Right lobe of liver (tissue), 6 donors: ENCODE measurements at regions of chr14 and their contacts with region 1.

Region 1: GRCh38 chr14:21103710-21104447 is 3.0 kb downstream of the TMEM253 start:
- DNase-seq: peak; percentile 96
- ATAC-seq: peak; percentile 83 to 90 (median 84)
- H3K4me3 ChIP-seq: peak overlapping the region; percentile 55 to 69 (median 68)
- H3K27ac ChIP-seq: peak overlapping the region; percentile 93 to 99 (median 98)
- H3K4me1 ChIP-seq: peaks cover 0 to 49% (median 27%) of the 10 kb centered on the region in 4 donors
- H3K27me3 ChIP-seq: no peaks in the 10 kb centered on the region
- CTCF ChIP-seq: peak; percentile 71 to 86 (median 74)
- POLR2A ChIP-seq: peak; percentile 79

Region 2: GRCh38 chr14:21039585-21040369 is 64.1 kb before region 1 on chr14:
- intact Hi-C with region 1: no loop called
- DNase-seq: peak in 1 of 3 donors; percentile 54
- ATAC-seq: peak; percentile 47 to 61 (median 48)
- H3K4me3 ChIP-seq: no peak overlapping the region
- H3K27ac ChIP-seq: peak overlapping the region; percentile 40 to 56 (median 46)
- H3K4me1 ChIP-seq: peaks cover 2 to 64% (median 20%) of the 10 kb centered on the region in 4 donors
- H3K27me3 ChIP-seq: no peaks in the 10 kb centered on the region
- CTCF ChIP-seq: peak; percentile 57 to 80 (median 70)
- POLR2A ChIP-seq: no peak

Region 3: DNA sequence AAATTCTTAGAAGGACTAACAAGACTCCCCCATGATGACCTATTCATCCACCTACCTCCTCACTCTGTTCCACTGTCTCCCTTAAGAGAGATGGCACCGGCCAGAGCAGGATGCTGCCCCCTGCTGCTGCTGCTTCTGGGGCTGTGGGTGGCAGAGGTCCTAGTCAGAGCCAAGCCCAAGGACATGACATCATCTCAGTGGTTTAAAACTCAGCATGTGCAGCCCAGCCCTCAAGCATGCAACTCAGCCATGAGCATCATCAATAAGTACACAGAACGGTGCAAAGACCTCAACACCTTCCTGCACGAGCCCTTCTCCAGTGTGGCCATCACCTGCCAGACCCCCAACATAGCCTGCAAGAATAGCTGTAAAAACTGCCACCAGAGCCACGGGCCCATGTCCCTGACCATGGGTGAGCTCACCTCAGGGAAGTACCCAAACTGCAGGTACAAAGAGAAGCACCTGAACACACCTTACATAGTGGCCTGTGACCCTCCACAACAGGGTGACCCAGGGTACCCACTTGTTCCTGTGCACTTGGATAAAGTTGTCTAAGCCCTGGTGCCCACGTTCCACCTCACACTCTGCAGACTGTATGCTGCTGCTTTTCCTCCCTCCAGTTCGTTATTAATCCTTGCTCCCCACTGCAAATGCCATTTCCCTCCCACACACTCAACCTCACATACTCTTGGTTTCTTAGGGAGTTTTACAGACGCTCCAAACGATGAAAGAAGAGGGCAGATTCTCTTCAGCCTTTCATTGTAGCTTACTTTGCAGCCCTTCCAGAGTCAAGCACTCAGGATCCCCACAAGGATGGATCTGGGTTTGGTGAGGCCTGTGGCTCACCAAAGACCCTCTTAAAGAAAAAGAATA is 45.8 kb before region 1 on chr14 and contains the start of gene RNASE8:
- intact Hi-C with region 1: loop called in 1 of 2 experiments (anchors 5 kb)
- DNase-seq: peak in 1 of 3 donors; percentile 25
- ATAC-seq: peak in 1 of 4 donors; percentile 2
- H3K4me3 ChIP-seq: no peak within 1 kb of the TSS
- H3K27ac ChIP-seq: peak within 1 kb of the TSS in 2 of 3 donors; percentile 54 to 74
- H3K4me1 ChIP-seq: peaks cover 0 to 61% (median 16%) of the 10 kb centered on the region in 4 donors
- H3K27me3 ChIP-seq: no peaks in the 10 kb centered on the region
- CTCF ChIP-seq: peak in 2 of 4 donors; percentile 10 to 23
- POLR2A ChIP-seq: no peak
- total RNA-seq, gene RNASE8: not detected